ENCODE measurements at regions of chr20 and their contacts with region 1.

Region 1: DNA sequence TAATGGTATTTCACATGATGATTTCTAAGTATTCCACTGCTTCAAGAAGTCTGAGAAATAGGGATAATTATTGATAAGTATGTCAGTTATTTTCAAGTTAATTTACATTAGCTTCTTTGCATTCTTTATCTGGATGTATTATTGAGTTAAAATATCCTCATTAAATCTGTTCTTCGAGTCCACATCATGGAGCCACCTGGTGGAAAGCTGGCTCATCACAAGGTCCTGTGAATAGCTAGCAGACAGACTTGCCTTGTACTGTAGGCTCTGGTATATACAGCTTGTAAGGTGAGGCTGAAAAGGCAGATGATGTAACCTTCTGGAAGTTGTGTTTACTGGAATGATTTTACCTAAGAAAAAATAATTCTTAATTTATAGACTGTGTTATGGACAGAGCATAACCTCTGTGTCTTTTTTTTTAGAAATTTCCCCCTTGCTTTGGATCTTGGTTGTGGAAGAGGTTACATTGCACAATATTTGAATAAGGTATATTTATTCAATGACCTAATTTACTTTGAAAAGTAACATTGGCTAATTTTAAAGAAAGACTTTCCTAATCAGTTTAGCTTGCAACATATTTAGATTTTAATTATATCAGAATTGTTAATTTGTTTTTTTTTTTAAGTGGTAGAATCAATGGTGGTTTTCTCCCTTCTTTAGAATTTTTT is 3.5 kb downstream of the NDUFAF5 start:
- H3K4me3 ChIP-seq: no peak overlapping the region
- H3K27ac ChIP-seq: no peak overlapping the region
- H3K4me1 ChIP-seq: no peaks in the 10 kb centered on the region
- CTCF ChIP-seq: no peak

Region 2: GRCh38 chr20:13799061-13799460 is 10.8 kb after region 1 on chr20:
- CTCF ChIA-PET with region 1: interaction called, 10 read pairs
- POLR2A ChIA-PET with region 1: interaction called, 5 read pairs
- H3K4me3 ChIP-seq: no peak overlapping the region
- H3K27ac ChIP-seq: no peak overlapping the region
- H3K4me1 ChIP-seq: no peaks in the 10 kb centered on the region
- CTCF ChIP-seq: no peak

Region 3: GRCh38 chr20:13809373-13809772 is 21.1 kb after region 1 on chr20:
- CTCF ChIA-PET with region 1: no interaction called
- POLR2A ChIA-PET with region 1: no interaction called
- H3K4me3 ChIP-seq: no peak overlapping the region
- H3K27ac ChIP-seq: no peak overlapping the region
- H3K4me1 ChIP-seq: no peaks in the 10 kb centered on the region
- CTCF ChIP-seq: no peak